PC-9 (cell line): ENCODE measurements at regions of chr4 and their contacts with region 1.

Region 1: DNA sequence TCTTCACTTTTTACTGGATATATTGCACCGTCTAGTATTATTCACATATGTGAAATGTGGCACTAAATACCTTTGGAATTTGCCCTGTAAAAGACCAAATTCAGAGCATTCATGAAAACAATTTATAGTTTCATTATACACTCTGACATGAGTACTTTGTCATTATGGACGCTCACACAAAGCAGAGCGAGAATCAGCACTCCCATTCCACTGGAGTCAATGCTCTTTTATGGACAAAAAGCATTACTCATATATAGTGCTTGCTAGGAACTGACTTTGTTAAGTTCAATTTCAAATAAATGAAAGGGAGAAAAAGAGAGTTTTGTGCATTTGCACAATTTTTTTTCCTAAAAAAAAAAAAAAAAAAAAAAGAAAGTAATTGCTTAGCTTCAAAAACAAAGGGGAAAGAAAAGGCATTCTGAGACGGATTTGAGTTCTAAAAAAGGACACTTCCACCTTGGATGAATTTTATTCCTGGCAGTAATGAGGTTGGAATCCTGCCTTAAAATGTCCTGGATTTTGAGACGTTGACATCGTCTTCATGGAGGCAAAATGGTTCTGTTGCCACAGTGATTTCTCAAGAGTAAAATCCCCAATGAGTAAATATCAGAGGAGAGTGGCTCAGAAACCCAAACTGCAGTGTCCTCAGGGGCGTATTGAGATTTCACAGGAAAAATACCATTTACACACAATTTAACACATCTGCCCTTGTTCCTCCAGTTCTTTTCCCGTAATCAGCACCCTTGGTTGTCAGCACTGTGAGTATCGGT is 34.8 kb downstream of the CCDC149 start:
- DNase-seq: no peak
- H3K4me3 ChIP-seq: no peak overlapping the region
- H3K27ac ChIP-seq: no peak overlapping the region
- H3K4me1 ChIP-seq: no peaks in the 10 kb centered on the region
- H3K27me3 ChIP-seq: no peaks in the 10 kb centered on the region
- CTCF ChIP-seq: no peak

Region 2: GRCh38 chr4:24578364-24578763 is 299.7 kb before region 1 on chr4:
- CTCF ChIA-PET with region 1: no interaction called
- POLR2A ChIA-PET with region 1: no interaction called
- intact Hi-C with region 1: no loop called
- DNase-seq: no peak
- H3K4me3 ChIP-seq: no peak overlapping the region
- H3K27ac ChIP-seq: peak overlapping the region; percentile 6; the same call in 1 of the 2 replicates
- H3K4me1 ChIP-seq: peaks cover 24% of the 10 kb centered on the region
- H3K27me3 ChIP-seq: no peaks in the 10 kb centered on the region
- CTCF ChIP-seq: no peak

Region 3: GRCh38 chr4:24736066-24736465 is 142.0 kb before region 1 on chr4:
- CTCF ChIA-PET with region 1: no interaction called
- POLR2A ChIA-PET with region 1: no interaction called
- intact Hi-C with region 1: no loop called
- DNase-seq: no peak
- H3K4me3 ChIP-seq: no peak overlapping the region
- H3K27ac ChIP-seq: no peak overlapping the region
- H3K4me1 ChIP-seq: no peaks in the 10 kb centered on the region
- H3K27me3 ChIP-seq: no peaks in the 10 kb centered on the region
- CTCF ChIP-seq: no peak; the same call in 1 of the 2 replicates

Region 4: GRCh38 chr4:25095832-25096231 is 217.8 kb after region 1 on chr4:
- CTCF ChIA-PET with region 1: no interaction called
- POLR2A ChIA-PET with region 1: no interaction called
- intact Hi-C with region 1: no loop called
- DNase-seq: no peak
- H3K4me3 ChIP-seq: no peak overlapping the region
- H3K27ac ChIP-seq: no peak overlapping the region
- H3K4me1 ChIP-seq: no peaks in the 10 kb centered on the region
- H3K27me3 ChIP-seq: no peaks in the 10 kb centered on the region
- CTCF ChIP-seq: no peak

Region 5: GRCh38 chr4:25172961-25173915 is 295.2 kb after region 1 on chr4:
- CTCF ChIA-PET with region 1: no interaction called
- POLR2A ChIA-PET with region 1: interaction called, 11 read pairs
- intact Hi-C with region 1: no loop called
- DNase-seq: peak; percentile 44 to 92
- H3K4me3 ChIP-seq: no peak overlapping the region
- H3K27ac ChIP-seq: peak overlapping the region; percentile 70
- H3K4me1 ChIP-seq: peaks cover 24% of the 10 kb centered on the region
- H3K27me3 ChIP-seq: no peaks in the 10 kb centered on the region
- CTCF ChIP-seq: no peak

Region 6: GRCh38 chr4:25466966-25467697 is 589.1 kb after region 1 on chr4:
- CTCF ChIA-PET with region 1: no interaction called
- POLR2A ChIA-PET with region 1: no interaction called
- intact Hi-C with region 1: no loop called
- DNase-seq: no peak
- H3K4me3 ChIP-seq: no peak overlapping the region
- H3K27ac ChIP-seq: no peak overlapping the region
- H3K4me1 ChIP-seq: no peaks in the 10 kb centered on the region
- H3K27me3 ChIP-seq: no peaks in the 10 kb centered on the region
- CTCF ChIP-seq: no peak